ENCODE measurements at regions of chr12 and their contacts with region 1.

Region 1: DNA sequence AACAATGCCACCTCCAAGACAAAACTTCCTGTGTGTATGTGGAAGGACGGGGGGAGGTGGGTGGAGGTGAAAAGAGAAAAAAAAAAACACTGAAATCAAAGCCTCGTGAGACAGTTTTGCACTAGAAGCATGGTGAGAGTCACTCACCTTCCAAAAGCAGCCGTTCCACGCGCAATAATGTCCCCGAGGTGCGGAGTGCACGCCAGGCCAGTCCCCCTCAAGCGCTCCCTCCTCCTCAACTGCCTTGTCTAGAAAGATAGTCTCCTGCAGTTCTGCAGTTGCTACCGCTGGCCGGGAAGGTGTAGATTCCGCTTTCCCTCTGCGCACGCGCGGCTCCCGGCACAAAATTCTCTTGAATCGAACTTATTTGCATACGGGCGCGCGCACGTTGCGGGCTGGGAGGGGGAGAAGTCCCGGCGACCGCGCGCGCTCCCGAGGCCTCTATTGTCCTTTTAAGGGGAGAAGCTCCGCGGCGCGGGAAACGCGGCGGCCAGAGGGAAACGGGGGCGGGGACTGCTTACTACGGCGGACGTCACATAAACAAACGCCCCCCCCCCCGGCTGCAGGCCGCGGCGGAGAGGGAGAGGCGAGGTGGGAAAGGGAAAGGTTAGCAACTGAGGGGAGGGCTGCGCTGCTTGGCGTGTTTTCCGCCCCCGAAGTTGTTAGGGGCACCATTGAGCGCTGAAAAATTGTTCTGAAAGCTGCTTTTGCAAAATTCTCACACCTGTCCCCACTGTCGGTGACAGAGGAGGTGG is at the start of gene SINHCAF:
- DNase-seq: peak; percentile 98
- H3K4me3 Mint-ChIP-seq: peak within 1 kb of the TSS; percentile 97
- H3K27ac Mint-ChIP-seq: peak within 1 kb of the TSS; percentile 95
- H3K4me1 Mint-ChIP-seq: peaks cover 41% of the 10 kb centered on the region
- H3K27me3 Mint-ChIP-seq: peaks cover 15% of the 10 kb centered on the region
- total RNA-seq, gene SINHCAF: 270 and 276 TPM in 2 replicates

Region 2: GRCh38 chr12:31205054-31205453 is 121.0 kb before region 1 on chr12:
- intact Hi-C with region 1: loop called (anchors 2 kb)
- DNase-seq: no peak
- H3K4me3 Mint-ChIP-seq: no peak overlapping the region
- H3K27ac Mint-ChIP-seq: no peak overlapping the region
- H3K4me1 Mint-ChIP-seq: peaks cover 14% of the 10 kb centered on the region
- H3K27me3 Mint-ChIP-seq: peaks cover 11% of the 10 kb centered on the region

Region 3: GRCh38 chr12:31589904-31590641 is 264.0 kb after region 1 on chr12:
- intact Hi-C with region 1: loop called (anchors 2 kb)
- DNase-seq: no peak
- H3K4me3 Mint-ChIP-seq: peak overlapping the region; percentile 73
- H3K27ac Mint-ChIP-seq: peak overlapping the region; percentile 29
- H3K4me1 Mint-ChIP-seq: peaks cover 13% of the 10 kb centered on the region
- H3K27me3 Mint-ChIP-seq: peaks cover 54% of the 10 kb centered on the region

Region 4: GRCh38 chr12:32106517-32107358 is 780.7 kb after region 1 on chr12 and contains the start of gene BICD1:
- intact Hi-C with region 1: loop called (anchors 5 kb)
- DNase-seq: peak; percentile 76
- H3K4me3 Mint-ChIP-seq: peak within 1 kb of the TSS; percentile 98
- H3K27ac Mint-ChIP-seq: peak within 1 kb of the TSS; percentile 87
- H3K4me1 Mint-ChIP-seq: peaks cover 36% of the 10 kb centered on the region
- H3K27me3 Mint-ChIP-seq: peaks cover 19% of the 10 kb centered on the region
- total RNA-seq, gene BICD1: 20.9 and 22.2 TPM in 2 replicates

Region 5: GRCh38 chr12:32603858-32604257 is 1277.8 kb after region 1 on chr12:
- intact Hi-C with region 1: loop called (anchors 10 kb)
- DNase-seq: peak; percentile 56
- H3K4me3 Mint-ChIP-seq: no peak overlapping the region
- H3K27ac Mint-ChIP-seq: peak overlapping the region; percentile 65
- H3K4me1 Mint-ChIP-seq: peaks cover 18% of the 10 kb centered on the region
- H3K27me3 Mint-ChIP-seq: no peaks in the 10 kb centered on the region

Measured in activated T-helper 1 cell treated with anti-CD3 and anti-CD28 coated beads, Interleukin-12 subunit alpha, Interleukin-12 subunit beta, Interleukin-2, Interleukin-4 antibody, amounts not matched to agents 30 ng/mL and 10 ng/mL and 1 ng/mL, durations not matched to agents 14 hours and 24 hours and 36 hours (primary cell).